Posterior cingulate gyrus (tissue), 11 donors: ENCODE measurements at regions of chr19 and their contacts with region 1.

Region 1: DNA sequence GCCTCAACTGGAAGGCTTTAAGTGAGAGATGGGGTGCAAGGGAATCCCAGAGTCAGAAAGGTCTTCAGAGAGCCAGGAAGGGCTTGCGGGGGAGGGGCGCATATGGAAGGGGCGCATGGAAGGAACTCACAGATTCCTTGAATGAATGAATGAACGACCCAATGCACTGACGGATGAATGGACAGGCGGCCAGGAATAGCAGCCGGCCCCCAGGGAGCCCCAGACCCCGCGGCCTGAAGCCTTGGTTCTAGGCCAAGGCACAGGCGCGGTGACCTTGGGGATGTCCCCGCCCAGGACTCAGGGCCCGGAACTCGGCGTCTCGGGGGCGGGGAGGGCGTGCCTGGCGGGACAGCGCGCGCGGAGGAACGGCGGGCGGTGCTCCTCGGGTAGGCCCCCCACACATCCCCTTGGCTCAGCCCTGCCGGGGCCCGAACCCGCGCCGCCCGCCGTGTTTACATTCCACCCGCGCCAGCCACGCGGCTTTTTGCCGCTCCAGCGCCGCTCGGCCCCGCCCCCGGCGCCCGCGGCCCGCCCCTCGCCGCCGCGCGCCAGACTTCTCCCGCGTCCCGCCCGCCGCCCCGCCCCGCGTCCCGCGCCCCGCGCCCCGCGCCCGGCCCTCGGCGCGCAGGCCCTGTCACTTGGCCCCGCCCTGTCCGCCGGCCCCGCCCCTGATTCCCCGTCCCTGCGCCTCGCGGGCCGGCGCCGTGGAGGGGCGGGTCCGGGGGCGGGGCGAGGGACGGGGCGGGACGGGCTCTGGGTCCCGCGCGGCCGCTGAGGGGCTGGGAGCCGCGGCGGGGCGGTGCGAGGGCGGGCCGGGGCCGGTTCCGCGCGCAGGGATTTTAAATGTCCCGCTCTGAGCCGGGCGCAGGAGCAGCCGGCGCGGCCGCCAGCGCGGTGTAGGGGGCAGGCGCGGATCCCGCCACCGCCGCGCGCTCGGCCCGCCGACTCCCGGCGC is at the start of gene CCNE1:
- DNase-seq: peak; percentile 81 to 98 (median 89)

Region 2: DNA sequence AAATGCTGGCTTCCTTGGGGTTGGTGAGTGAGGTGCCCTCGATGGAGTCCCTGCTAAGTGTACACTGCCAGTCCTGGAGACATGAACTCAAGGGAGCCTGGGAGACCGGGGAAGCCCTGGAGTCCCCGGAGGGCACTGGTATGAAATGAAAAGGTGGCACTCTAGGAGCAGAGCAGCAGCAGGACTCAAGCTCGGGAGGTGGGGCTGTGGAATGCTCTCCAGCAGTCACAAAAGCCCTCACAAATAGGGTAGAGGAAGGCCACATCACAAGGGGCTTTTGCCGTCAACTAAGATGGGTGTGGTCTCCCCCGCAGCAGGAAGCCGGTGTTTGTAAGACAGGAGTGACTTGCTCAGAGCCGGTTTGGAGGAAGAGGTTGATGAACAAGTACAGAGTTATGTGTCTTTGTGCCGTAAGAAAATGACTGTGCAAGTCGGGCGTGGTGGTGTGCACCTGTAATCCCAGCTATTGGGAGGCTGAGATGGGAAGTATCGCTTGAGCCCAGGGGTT is 19.7 kb after region 1 on chr19:
- intact Hi-C with region 1: no loop called
- DNase-seq: peak in 2 of 10 donors; percentile 34 to 55

Region 3: GRCh38 chr19:29844891-29845572 is 33.6 kb after region 1 on chr19:
- intact Hi-C with region 1: loop called (anchors 1 kb)
- DNase-seq: peak; percentile 74 to 98 (median 84)